Brain microvascular endothelial cell (primary cell): ENCODE measurements at regions of chr3 and their contacts with region 1.

Region 1: GRCh38 chr3:160941885-160942494 is 163.2 kb downstream of the B3GALNT1 start:
- DNase-seq: peak; percentile 83
- H3K4me3 ChIP-seq: no peak overlapping the region
- H3K27ac ChIP-seq: no peak overlapping the region
- H3K27me3 ChIP-seq: no peaks in the 10 kb centered on the region
- CTCF ChIP-seq: peak; percentile 76

Region 2: DNA sequence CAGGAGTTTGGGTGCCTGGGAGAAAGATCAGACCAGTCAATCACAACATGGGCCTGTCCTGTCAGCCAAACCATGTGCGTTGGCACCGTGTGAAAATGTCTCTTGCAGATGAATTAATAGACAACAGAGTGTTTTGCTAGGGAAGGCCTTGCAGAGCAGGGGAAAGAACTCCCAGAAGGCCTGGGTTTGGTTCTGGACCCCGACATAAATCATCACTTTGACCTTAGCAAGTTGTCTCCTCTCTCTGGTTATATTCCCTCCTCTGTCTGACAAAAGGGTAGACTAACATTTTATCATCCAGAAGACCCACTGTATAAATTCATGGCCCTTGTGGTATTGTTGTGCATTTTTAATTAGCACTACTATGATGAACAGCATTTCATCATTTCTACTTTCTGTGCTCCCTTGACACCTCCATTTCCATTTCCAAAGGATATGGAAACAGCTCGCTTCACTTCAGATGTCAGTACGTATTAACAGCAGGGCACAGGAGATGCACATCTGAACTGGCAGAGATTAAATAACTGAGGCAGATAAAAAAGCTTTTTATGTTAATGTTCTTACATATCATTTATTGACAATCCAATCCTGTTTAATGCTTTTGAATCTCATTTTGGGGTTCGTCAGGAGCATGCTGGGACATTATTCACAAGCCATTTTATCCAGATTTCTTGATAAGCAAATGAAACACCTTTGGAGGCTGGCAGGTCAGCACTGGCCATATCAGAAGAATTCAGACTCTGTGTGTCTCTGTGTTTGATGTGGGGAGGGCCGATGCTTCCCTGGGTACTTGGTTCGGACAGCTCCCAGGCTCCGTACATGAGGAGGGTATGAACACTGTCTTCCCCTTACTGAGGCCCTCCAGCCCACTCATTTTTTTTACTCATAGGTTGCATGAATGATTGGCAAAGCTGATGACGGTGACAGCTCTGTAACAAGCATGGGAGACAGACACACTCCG is 981.5 kb before region 1 on chr3:
- in situ Hi-C with region 1: no loop called
- DNase-seq: no peak
- H3K4me3 ChIP-seq: no peak overlapping the region
- H3K27ac ChIP-seq: no peak overlapping the region
- H3K27me3 ChIP-seq: no peaks in the 10 kb centered on the region
- CTCF ChIP-seq: no peak

Region 3: GRCh38 chr3:160686955-160687535 is 254.9 kb before region 1 on chr3:
- in situ Hi-C with region 1: loop called (anchors 25 kb)
- DNase-seq: no peak
- H3K4me3 ChIP-seq: no peak overlapping the region
- H3K27ac ChIP-seq: no peak overlapping the region
- H3K27me3 ChIP-seq: no peaks in the 10 kb centered on the region
- CTCF ChIP-seq: no peak